ENCODE measurements at regions of chr3 and their contacts with region 1.

Region 1: GRCh38 chr3:54599716-54600115 is 328.1 kb downstream of the LRTM1 start:
- DNase-seq: peak; percentile 22 to 90 (median 62)

Region 2: GRCh38 chr3:54822206-54822605 is 222.5 kb after region 1 on chr3:
- intact Hi-C with region 1: loop called (anchors 5 kb)
- DNase-seq: peak in 2 of 10 donors; percentile 7 to 23